Right ventricle myocardium inferior (tissue), 1 donor: ENCODE measurements at regions of chr6 and their contacts with region 1.

Region 1: DNA sequence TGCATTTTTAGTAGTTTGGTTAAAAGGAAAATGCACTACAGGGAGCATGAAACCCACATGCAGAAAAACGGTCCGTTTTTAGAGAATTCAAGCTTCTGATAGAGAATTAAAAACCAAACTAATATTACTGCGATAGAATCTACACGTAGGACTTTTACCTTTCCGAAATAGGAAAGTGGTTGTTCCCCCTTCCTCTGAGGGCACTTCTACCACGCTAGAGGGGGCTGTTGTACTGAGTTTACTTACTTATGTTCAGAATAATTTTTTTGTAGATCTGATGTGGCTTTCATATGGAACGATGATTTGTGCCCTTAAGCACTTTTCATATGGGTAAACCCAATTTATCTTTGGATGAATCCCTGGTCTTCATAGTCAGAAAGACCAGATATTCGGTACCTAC is 264.3 kb upstream of the PLN start:
- DNase-seq: no peak
- ATAC-seq: peak; percentile 58

Region 2: GRCh38 chr6:118372413-118372812 is 88.6 kb after region 1 on chr6:
- intact Hi-C with region 1: loop called (anchors 2 kb)
- DNase-seq: no peak
- ATAC-seq: peak; percentile 91

Region 3: DNA sequence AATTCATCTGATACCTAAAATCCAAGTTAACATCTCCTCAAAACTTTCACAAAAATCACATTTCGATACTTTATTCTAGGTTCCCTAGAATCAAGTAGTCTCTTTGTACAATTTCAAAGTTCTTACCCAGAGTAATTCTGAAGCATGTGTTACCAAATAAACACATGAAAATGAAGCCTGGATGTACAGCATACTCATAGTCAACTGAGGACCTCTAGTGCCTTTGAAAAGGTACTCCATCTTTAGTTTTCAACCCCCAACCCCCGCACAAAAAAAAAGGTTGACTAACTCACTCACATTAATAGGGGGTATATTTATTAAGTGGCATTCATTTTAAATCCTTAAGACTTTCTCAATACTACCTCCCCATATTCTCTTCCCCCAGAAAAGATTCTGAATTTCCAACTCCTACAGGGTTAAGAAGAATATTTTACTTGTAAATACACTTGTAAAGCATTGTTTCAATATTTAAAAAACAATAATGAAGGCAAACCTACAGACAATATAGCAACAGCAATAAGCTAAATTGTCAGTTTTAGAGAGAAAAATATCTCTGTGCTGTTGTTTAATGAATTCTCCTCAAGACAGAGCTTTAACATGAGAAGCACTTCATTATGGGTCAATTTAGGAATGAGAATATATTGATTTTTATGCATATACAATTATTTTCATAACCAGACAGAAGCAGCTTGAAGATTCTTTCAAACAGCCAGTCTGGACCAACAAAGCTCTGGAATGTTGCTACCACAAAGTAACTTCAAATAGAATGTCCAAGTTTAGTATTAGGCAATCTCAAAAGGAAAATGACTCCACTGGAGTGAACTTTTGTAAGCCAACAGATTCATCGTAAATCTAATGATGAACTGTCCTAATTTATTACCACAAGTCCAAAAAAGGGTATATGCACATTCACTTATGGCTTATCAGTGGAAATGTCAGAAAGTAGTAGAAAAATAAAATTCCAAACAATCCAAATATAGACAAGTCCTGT is 267.6 kb after region 1 on chr6:
- intact Hi-C with region 1: loop called (anchors 2 kb)
- DNase-seq: no peak
- ATAC-seq: peak; percentile 47

Region 4: GRCh38 chr6:118580585-118581419 is 297.0 kb after region 1 on chr6:
- intact Hi-C with region 1: loop called (anchors 5 kb)
- DNase-seq: no peak
- ATAC-seq: peak; percentile 88

Region 5: GRCh38 chr6:118776607-118777549 is 493.1 kb after region 1 on chr6:
- intact Hi-C with region 1: loop called (anchors 5 kb)
- DNase-seq: no peak
- ATAC-seq: peak; percentile 57